ENCODE measurements at regions of chr17 and their contacts with region 1.

Region 1: GRCh38 chr17:45098869-45099616 is 33.3 kb downstream of the PLCD3 start:
- DNase-seq: peak; percentile 51 to 69 (median 69)
- H3K4me3 ChIP-seq: no peak overlapping the region
- H3K4me3 Mint-ChIP-seq: no peak overlapping the region
- H3K27ac ChIP-seq: no peak overlapping the region
- H3K27ac Mint-ChIP-seq: peak overlapping the region in 4 of 7 donors; percentile 15 to 69 (median 58)
- H3K4me1 ChIP-seq: no peaks in the 10 kb centered on the region
- H3K4me1 Mint-ChIP-seq: no peaks in the 10 kb centered on the region
- H3K27me3 ChIP-seq: no peaks in the 10 kb centered on the region
- H3K27me3 Mint-ChIP-seq: peaks cover 0 to 2% (median 2%) of the 10 kb centered on the region in 3 donors
- CTCF ChIP-seq: peak; percentile 89

Region 2: DNA sequence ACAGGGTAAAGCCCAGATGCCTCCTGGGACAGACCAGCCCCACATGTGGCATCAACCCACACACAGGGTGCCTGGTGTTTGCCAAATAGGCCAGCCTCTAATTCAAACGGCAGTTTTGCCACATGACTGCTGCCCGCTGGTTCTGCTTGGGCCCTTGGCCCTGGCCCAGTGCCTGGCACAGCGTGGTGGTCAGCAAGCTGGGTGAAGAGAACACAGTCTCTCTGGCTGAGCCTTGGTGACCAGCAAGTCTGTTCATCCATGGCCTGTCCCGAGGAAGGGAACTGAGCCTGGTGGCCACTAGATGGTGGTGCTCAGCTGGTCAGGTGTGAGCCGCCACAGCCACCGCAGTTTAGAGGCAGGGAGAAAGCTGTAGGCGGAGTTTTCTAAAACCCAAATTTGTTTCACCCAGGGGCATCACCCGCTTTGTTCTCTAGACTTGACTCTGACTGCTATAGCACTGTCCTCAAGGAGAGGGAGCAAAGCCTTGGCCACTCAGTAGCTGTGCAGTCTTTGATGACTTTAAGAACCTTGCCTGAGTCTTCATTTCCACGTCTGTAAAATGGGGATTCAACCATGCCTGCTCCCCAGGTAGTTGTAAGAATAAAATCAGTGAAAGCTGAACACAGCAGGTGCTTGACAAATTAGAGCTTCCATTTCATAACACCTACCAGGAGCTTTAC is 179.0 kb before region 1 on chr17:
- intact Hi-C with region 1: loop called (anchors 2 to 10 kb)
- DNase-seq: peak; percentile 55 to 70 (median 65)
- H3K4me3 ChIP-seq: no peak overlapping the region
- H3K4me3 Mint-ChIP-seq: no peak overlapping the region
- H3K27ac ChIP-seq: no peak overlapping the region
- H3K27ac Mint-ChIP-seq: no peak overlapping the region
- H3K4me1 ChIP-seq: peaks cover 15 to 18% of the 10 kb centered on the region in 2 donors
- H3K4me1 Mint-ChIP-seq: peaks cover 16% of the 10 kb centered on the region
- H3K27me3 ChIP-seq: peaks cover 6 to 15% of the 10 kb centered on the region in 2 donors
- H3K27me3 Mint-ChIP-seq: peaks cover 23 to 30% (median 25%) of the 10 kb centered on the region in 3 donors
- CTCF ChIP-seq: peak; percentile 78